CD8-positive, alpha-beta memory T cell (primary cell): ENCODE measurements at regions of chr15 and their contacts with region 1.

Region 1: GRCh38 chr15:79853458-79854328 is 43.1 kb downstream of the MTHFS start:
- DNase-seq: peak; percentile 12 to 68 (median 27)
- H3K4me3 ChIP-seq: no peak overlapping the region
- H3K4me3 Mint-ChIP-seq: no peak overlapping the region
- H3K27ac ChIP-seq: no peak overlapping the region
- H3K27ac Mint-ChIP-seq: peak overlapping the region in 3 of 8 donors; percentile 24 to 88 (median 59)
- H3K4me1 ChIP-seq: peaks cover 3% of the 10 kb centered on the region
- H3K4me1 Mint-ChIP-seq: peaks cover 11 to 23% (median 14%) of the 10 kb centered on the region in 3 donors
- H3K27me3 ChIP-seq: no peaks in the 10 kb centered on the region
- H3K27me3 Mint-ChIP-seq: no peaks in the 10 kb centered on the region

Region 2: GRCh38 chr15:79380755-79381497 is 472.8 kb before region 1 on chr15:
- CTCF ChIA-PET with region 1: interaction called, 23 read pairs
- POLR2A ChIA-PET with region 1: no interaction called
- DNase-seq: peak; percentile 39 to 76 (median 61)
- H3K4me3 ChIP-seq: no peak overlapping the region
- H3K4me3 Mint-ChIP-seq: no peak overlapping the region
- H3K27ac ChIP-seq: no peak overlapping the region
- H3K27ac Mint-ChIP-seq: no peak overlapping the region
- H3K4me1 ChIP-seq: no peaks in the 10 kb centered on the region
- H3K4me1 Mint-ChIP-seq: peaks cover 0 to 4% (median 0%) of the 10 kb centered on the region in 3 donors
- H3K27me3 ChIP-seq: no peaks in the 10 kb centered on the region
- H3K27me3 Mint-ChIP-seq: peaks cover 0 to 2% of the 10 kb centered on the region in 2 donors

Region 3: DNA sequence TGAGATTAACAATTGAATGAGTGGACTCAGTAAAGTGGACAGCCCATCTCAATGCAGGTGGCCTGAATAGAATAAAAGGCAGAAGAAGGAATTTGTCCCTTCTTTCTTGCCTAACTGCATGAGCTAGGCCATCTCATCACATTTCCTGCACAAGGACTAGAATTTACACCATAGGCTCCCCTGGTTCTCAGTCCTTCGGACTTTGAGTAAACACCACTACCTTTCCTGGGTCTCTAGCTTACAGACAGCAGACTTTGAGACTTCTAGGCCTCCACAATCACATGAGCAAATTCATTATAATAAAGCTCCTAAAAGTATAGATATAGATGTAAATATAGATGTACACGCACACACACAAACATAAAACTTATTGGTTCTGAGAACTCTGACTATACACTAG is 14.9 kb after region 1 on chr15:
- CTCF ChIA-PET with region 1: interaction called, 24 read pairs
- POLR2A ChIA-PET with region 1: no interaction called
- DNase-seq: no peak
- H3K4me3 ChIP-seq: no peak overlapping the region
- H3K4me3 Mint-ChIP-seq: no peak overlapping the region
- H3K27ac ChIP-seq: no peak overlapping the region
- H3K27ac Mint-ChIP-seq: peak overlapping the region in 1 of 8 donors; percentile 17
- H3K4me1 ChIP-seq: peaks cover 11% of the 10 kb centered on the region
- H3K4me1 Mint-ChIP-seq: peaks cover 20 to 43% (median 28%) of the 10 kb centered on the region in 3 donors
- H3K27me3 ChIP-seq: no peaks in the 10 kb centered on the region
- H3K27me3 Mint-ChIP-seq: no peaks in the 10 kb centered on the region

Region 4: GRCh38 chr15:79881254-79881653 is 27.6 kb after region 1 on chr15:
- CTCF ChIA-PET with region 1: interaction called, 11 read pairs
- POLR2A ChIA-PET with region 1: no interaction called
- DNase-seq: no peak
- H3K4me3 ChIP-seq: no peak overlapping the region
- H3K4me3 Mint-ChIP-seq: no peak overlapping the region
- H3K27ac ChIP-seq: no peak overlapping the region
- H3K27ac Mint-ChIP-seq: no peak overlapping the region
- H3K4me1 ChIP-seq: no peaks in the 10 kb centered on the region
- H3K4me1 Mint-ChIP-seq: peaks cover 22 to 37% (median 25%) of the 10 kb centered on the region in 3 donors
- H3K27me3 ChIP-seq: no peaks in the 10 kb centered on the region
- H3K27me3 Mint-ChIP-seq: no peaks in the 10 kb centered on the region

Region 5: GRCh38 chr15:79923515-79924395 is 70.1 kb after region 1 on chr15:
- CTCF ChIA-PET with region 1: interaction called, 14 read pairs
- POLR2A ChIA-PET with region 1: no interaction called
- DNase-seq: peak; percentile 96 to 100 (median 98)
- H3K4me3 ChIP-seq: peak overlapping the region; percentile 93
- H3K4me3 Mint-ChIP-seq: peak overlapping the region; percentile 92 to 98 (median 94)
- H3K27ac ChIP-seq: peak overlapping the region; percentile 97
- H3K27ac Mint-ChIP-seq: peak overlapping the region; percentile 93 to 99 (median 96)
- H3K4me1 ChIP-seq: peaks cover 17% of the 10 kb centered on the region
- H3K4me1 Mint-ChIP-seq: peaks cover 20 to 29% (median 28%) of the 10 kb centered on the region in 3 donors
- H3K27me3 ChIP-seq: no peaks in the 10 kb centered on the region
- H3K27me3 Mint-ChIP-seq: no peaks in the 10 kb centered on the region

Region 6: GRCh38 chr15:79994615-79995014 is 140.9 kb after region 1 on chr15:
- CTCF ChIA-PET with region 1: interaction called, 12 read pairs
- POLR2A ChIA-PET with region 1: no interaction called
- DNase-seq: no peak
- H3K4me3 ChIP-seq: no peak overlapping the region
- H3K4me3 Mint-ChIP-seq: no peak overlapping the region
- H3K27ac ChIP-seq: no peak overlapping the region
- H3K27ac Mint-ChIP-seq: no peak overlapping the region
- H3K4me1 ChIP-seq: no peaks in the 10 kb centered on the region
- H3K4me1 Mint-ChIP-seq: peaks cover 3 to 5% (median 3%) of the 10 kb centered on the region in 3 donors
- H3K27me3 ChIP-seq: no peaks in the 10 kb centered on the region
- H3K27me3 Mint-ChIP-seq: peaks cover 5 to 9% of the 10 kb centered on the region in 2 donors